ENCODE measurements at regions of chr22 and their contacts with region 1.

Region 1: DNA sequence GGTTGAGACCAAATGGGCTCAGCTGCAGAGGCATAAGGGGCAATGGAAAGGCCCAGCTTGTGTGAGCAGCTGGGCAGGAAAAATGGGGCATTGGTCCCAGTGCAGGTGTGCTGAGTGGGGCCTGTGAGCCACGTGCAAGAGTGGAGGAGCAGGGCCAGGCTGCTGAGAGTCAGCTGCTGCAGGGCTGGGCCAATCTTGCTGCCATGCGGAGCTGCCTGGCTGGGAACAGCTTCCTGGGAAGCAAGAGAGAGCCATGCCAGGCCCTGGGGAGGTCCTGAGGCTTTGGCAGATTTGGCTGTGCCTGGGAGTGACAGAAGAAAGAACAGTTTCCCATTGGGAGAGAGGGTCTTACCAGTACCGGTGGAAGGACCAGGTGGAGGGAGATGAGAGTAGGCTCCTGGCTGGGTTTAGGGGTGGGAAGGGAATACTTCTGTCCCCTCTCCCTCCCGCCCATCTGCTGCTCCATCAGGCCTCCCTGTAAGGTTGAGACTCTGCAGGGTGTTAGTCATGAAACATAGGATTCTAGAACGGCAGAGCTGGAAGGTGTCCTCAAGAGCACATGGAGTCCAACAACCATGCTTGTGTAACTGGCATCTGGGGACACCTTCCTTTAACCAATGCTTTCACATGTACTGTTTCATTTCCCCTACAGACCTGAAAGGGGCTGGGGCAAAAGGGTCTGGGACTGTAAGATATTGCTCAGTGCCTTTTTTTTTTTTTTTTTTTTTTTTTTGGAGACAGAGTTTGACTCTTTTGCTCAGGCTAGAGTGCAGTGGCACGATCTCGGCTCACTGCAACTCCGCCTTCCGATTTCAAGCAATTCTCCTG is 10.4 kb downstream of the SEPTIN3 start:
- H3K4me3 ChIP-seq: no peak overlapping the region
- H3K27ac ChIP-seq: no peak overlapping the region
- H3K4me1 ChIP-seq: peaks cover 3% of the 10 kb centered on the region; the same call in 1 of the 2 replicates
- CTCF ChIP-seq: no peak

Region 2: DNA sequence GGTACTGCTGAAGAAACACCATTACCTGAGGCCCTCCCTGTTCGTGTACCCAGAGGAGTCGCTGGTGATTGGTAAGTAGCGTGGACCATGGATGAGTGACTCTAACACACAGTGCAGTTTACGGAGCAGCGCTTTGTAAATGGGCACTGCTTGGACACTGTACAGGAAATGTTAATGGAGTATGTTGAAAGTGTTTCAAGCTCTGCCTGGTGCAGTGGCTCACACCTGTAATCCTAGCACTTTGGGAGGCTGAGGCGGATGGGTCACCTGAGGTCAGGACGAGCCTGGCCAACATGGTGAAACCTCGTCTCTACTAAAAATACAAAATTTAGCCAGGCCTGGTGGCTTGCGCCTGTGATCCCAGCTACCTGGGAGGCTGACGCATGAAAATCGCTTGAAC is 328.8 kb before region 1 on chr22:
- CTCF ChIA-PET with region 1: no interaction called
- POLR2A ChIA-PET with region 1: interaction called, 12 read pairs
- H3K4me3 ChIP-seq: no peak overlapping the region
- H3K27ac ChIP-seq: no peak overlapping the region
- H3K4me1 ChIP-seq: no peaks in the 10 kb centered on the region
- CTCF ChIP-seq: no peak

Measured in HEK293 (cell line).